GM12878 (cell line): ENCODE measurements at regions of chr20 and their contacts with region 1.

Region 1: GRCh38 chr20:9392892-9393857 is 121.2 kb upstream of the LAMP5 start:
- DNase-seq: no peak
- ATAC-seq: peak; percentile 80
- H3K4me3 ChIP-seq: no peak overlapping the region
- H3K27ac ChIP-seq: no peak overlapping the region
- H3K4me1 ChIP-seq: peaks cover 8% of the 10 kb centered on the region
- H3K27me3 ChIP-seq: no peaks in the 10 kb centered on the region
- CTCF ChIP-seq: peak; percentile 62 to 72 (median 64); a peak in 5 of 6 replicates
- EP300 ChIP-seq: no peak
- POLR2A ChIP-seq: no peak
- RAD21 ChIP-seq: peak; percentile 54

Region 2: DNA sequence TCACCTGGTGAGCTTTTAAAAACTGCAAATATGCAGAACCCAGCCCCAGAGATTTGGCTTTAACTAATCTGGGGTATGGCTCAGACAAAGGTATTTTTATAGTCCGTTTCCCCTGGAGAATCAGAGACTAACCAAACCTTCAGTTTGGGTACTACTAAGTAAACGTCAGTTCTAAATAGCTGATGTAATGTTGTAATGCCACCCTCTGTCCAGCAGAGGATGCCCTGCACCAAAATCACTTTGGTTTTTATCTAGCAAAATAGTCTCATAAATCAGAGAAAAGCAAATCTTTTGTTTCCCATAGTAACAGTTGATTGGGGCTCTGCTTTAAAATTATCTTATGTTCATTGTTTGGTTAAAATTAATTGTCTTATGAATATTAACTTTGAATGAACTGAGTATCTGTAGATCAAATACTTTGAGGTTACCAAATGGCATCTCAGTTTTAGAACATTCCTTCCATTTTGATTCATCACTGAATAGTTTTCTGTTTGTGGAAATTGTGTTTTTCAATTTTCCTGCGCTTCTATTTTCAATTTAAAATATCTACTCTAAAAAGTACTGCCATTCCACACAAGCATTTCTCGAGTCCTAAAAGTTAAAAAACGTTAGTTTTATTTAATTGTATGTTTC is 602.6 kb before region 1 on chr20:
- CTCF ChIA-PET with region 1: no interaction called
- POLR2A ChIA-PET with region 1: no interaction called
- RAD21 ChIA-PET with region 1: no interaction called
- SMC1A ChIA-PET with region 1: no interaction called
- in situ Hi-C with region 1: no loop called
- intact Hi-C with region 1: loop called (anchors 2 kb)
- DNase-seq: no peak
- ATAC-seq: peak; percentile 66
- H3K4me3 ChIP-seq: no peak overlapping the region
- H3K27ac ChIP-seq: no peak overlapping the region
- H3K4me1 ChIP-seq: no peaks in the 10 kb centered on the region
- H3K27me3 ChIP-seq: no peaks in the 10 kb centered on the region; a peak in 1 of 4 replicates
- CTCF ChIP-seq: peak; percentile 78 to 96 (median 94)
- EP300 ChIP-seq: no peak
- POLR2A ChIP-seq: no peak
- RAD21 ChIP-seq: peak; percentile 65

Region 3: DNA sequence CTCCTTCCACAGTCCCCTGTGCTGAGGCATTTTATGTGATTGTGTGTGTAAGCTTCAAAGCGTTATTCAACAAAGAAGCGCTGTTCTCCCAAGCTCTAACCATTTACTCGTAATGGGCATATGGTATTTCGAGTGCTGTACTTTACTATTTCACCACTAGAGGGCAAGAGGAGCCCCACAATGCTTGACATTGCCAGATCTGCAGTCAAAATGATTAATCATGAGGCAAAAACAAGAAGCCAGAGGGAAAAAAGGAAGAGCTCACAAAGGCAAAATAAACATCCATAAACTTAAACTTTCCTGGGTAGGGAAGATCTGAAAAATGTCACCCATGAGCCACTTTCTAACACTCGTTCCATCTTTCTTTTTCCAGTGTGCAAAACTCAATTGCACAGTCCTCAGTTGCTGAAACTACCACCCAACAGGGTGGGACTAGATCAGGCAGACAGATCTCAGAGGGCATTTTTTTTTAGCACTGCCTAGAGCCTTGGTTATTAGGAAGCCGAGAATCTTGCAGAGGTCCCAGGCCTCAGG is 539.3 kb before region 1 on chr20:
- CTCF ChIA-PET with region 1: interaction called, 4 read pairs
- POLR2A ChIA-PET with region 1: no interaction called
- RAD21 ChIA-PET with region 1: interaction called, 5 read pairs
- SMC1A ChIA-PET with region 1: no interaction called
- in situ Hi-C with region 1: no loop called
- intact Hi-C with region 1: loop called (anchors 2 kb)
- DNase-seq: peak; percentile 5
- ATAC-seq: peak; percentile 92
- H3K4me3 ChIP-seq: no peak overlapping the region
- H3K27ac ChIP-seq: no peak overlapping the region
- H3K4me1 ChIP-seq: no peaks in the 10 kb centered on the region
- H3K27me3 ChIP-seq: no peaks in the 10 kb centered on the region
- CTCF ChIP-seq: peak; percentile 78 to 86 (median 80)
- EP300 ChIP-seq: no peak
- POLR2A ChIP-seq: no peak
- RAD21 ChIP-seq: peak; percentile 68

Region 4: DNA sequence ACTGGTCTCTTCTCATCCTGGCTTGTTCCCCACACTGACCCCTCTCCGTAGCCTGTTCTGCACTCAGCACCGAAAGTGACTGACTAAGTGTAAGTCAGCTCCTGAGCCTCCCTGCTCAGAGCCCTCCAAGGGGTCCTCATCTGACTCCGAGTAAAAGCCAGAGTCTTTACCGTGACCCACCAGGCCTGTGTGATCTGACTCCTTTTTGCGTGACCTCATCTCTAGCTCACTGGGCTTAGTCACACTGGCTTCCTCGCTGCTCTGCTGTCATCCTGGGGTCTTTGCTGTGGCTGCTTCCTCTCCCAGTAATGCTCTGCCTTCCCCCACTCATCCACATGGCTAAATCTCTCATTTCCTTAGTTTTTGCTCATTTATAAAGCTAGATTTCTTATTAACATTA is 207.7 kb before region 1 on chr20:
- CTCF ChIA-PET with region 1: no interaction called
- POLR2A ChIA-PET with region 1: no interaction called
- RAD21 ChIA-PET with region 1: no interaction called
- SMC1A ChIA-PET with region 1: no interaction called
- in situ Hi-C with region 1: no loop called
- intact Hi-C with region 1: no loop called
- DNase-seq: no peak
- ATAC-seq: no peak
- H3K4me3 ChIP-seq: no peak overlapping the region
- H3K27ac ChIP-seq: no peak overlapping the region
- H3K4me1 ChIP-seq: no peaks in the 10 kb centered on the region
- H3K27me3 ChIP-seq: no peaks in the 10 kb centered on the region
- CTCF ChIP-seq: no peak
- EP300 ChIP-seq: no peak
- POLR2A ChIP-seq: no peak
- RAD21 ChIP-seq: no peak

Region 5: GRCh38 chr20:9363673-9364072 is 29.5 kb before region 1 on chr20:
- CTCF ChIA-PET with region 1: no interaction called
- POLR2A ChIA-PET with region 1: no interaction called
- RAD21 ChIA-PET with region 1: no interaction called
- SMC1A ChIA-PET with region 1: no interaction called
- in situ Hi-C with region 1: no loop called
- intact Hi-C with region 1: no loop called
- DNase-seq: no peak
- ATAC-seq: no peak
- H3K4me3 ChIP-seq: no peak overlapping the region
- H3K27ac ChIP-seq: no peak overlapping the region
- H3K4me1 ChIP-seq: no peaks in the 10 kb centered on the region
- H3K27me3 ChIP-seq: peaks cover 0 to 3% of the 10 kb centered on the region in 2 experiments; a peak in 3 of 4 replicates
- CTCF ChIP-seq: no peak
- EP300 ChIP-seq: no peak
- POLR2A ChIP-seq: no peak
- RAD21 ChIP-seq: no peak

Region 6: DNA sequence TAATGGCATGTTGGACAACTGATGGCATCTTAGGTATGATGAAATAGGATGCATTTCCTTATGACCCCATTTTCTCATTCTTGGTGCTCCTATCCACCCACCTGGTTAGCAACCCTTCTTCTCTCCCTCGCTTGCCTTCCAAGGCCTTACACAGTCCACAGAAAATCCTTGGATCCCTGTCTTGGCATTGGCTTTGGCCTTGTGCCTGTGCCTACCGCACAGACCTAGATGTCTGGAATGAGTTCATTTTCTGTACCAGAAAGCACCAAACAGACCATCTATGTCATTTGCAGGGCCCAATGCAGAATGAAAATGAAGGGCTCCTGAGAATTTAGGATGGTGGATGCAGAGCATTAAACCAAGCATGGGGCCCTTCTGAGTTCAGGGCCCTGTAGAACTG is 22.3 kb after region 1 on chr20:
- CTCF ChIA-PET with region 1: no interaction called
- POLR2A ChIA-PET with region 1: no interaction called
- RAD21 ChIA-PET with region 1: no interaction called
- SMC1A ChIA-PET with region 1: no interaction called
- in situ Hi-C with region 1: no loop called
- intact Hi-C with region 1: no loop called
- DNase-seq: no peak
- ATAC-seq: no peak
- H3K4me3 ChIP-seq: no peak overlapping the region
- H3K27ac ChIP-seq: no peak overlapping the region
- H3K4me1 ChIP-seq: peaks cover 14% of the 10 kb centered on the region
- H3K27me3 ChIP-seq: no peaks in the 10 kb centered on the region
- CTCF ChIP-seq: no peak
- EP300 ChIP-seq: no peak
- POLR2A ChIP-seq: no peak
- RAD21 ChIP-seq: no peak

Region 7: GRCh38 chr20:9503526-9504245 is 110.5 kb after region 1 on chr20:
- CTCF ChIA-PET with region 1: no interaction called
- POLR2A ChIA-PET with region 1: no interaction called
- RAD21 ChIA-PET with region 1: no interaction called
- SMC1A ChIA-PET with region 1: no interaction called
- in situ Hi-C with region 1: no loop called
- intact Hi-C with region 1: no loop called
- DNase-seq: no peak
- ATAC-seq: no peak
- H3K4me3 ChIP-seq: no peak overlapping the region
- H3K27ac ChIP-seq: no peak overlapping the region
- H3K4me1 ChIP-seq: peaks cover 32% of the 10 kb centered on the region
- H3K27me3 ChIP-seq: peaks cover 0 to 15% of the 10 kb centered on the region in 2 experiments; a peak in 3 of 4 replicates
- CTCF ChIP-seq: peak in 2 of 3 experiments; percentile 3 to 26; a peak in 1 of 6 replicates
- EP300 ChIP-seq: no peak
- POLR2A ChIP-seq: no peak
- RAD21 ChIP-seq: no peak